ENCODE measurements at regions of chr5 and their contacts with region 1.

Region 1: GRCh38 chr5:148730943-148731861 is 76.9 kb upstream of the HTR4 start:
- DNase-seq: peak; percentile 65 to 69
- H3K4me3 ChIP-seq: no peak overlapping the region
- H3K27ac ChIP-seq: no peak overlapping the region
- H3K4me1 ChIP-seq: peaks cover 27% of the 10 kb centered on the region
- H3K27me3 ChIP-seq: no peaks in the 10 kb centered on the region
- CTCF ChIP-seq: peak; percentile 95

Region 2: GRCh38 chr5:146860213-146860893 is 1870.8 kb before region 1 on chr5:
- CTCF ChIA-PET with region 1: no interaction called
- POLR2A ChIA-PET with region 1: interaction called, 42 read pairs
- intact Hi-C with region 1: no loop called
- DNase-seq: peak in 1 of 2 experiments; percentile 66
- H3K4me3 ChIP-seq: no peak overlapping the region
- H3K27ac ChIP-seq: no peak overlapping the region
- H3K4me1 ChIP-seq: 0 out of 2 replicates have a peak, but pooled peaks cover 6% of the 10 kb centered on the region
- H3K27me3 ChIP-seq: no peaks in the 10 kb centered on the region
- CTCF ChIP-seq: no peak

Region 3: GRCh38 chr5:148179234-148179824 is 551.9 kb before region 1 on chr5:
- CTCF ChIA-PET with region 1: interaction called, 9 read pairs
- POLR2A ChIA-PET with region 1: no interaction called
- intact Hi-C with region 1: loop called (anchors 1 kb)
- DNase-seq: peak; percentile 6 to 63
- H3K4me3 ChIP-seq: no peak overlapping the region
- H3K27ac ChIP-seq: no peak overlapping the region
- H3K4me1 ChIP-seq: no peaks in the 10 kb centered on the region
- H3K27me3 ChIP-seq: no peaks in the 10 kb centered on the region
- CTCF ChIP-seq: peak; percentile 84

Region 4: DNA sequence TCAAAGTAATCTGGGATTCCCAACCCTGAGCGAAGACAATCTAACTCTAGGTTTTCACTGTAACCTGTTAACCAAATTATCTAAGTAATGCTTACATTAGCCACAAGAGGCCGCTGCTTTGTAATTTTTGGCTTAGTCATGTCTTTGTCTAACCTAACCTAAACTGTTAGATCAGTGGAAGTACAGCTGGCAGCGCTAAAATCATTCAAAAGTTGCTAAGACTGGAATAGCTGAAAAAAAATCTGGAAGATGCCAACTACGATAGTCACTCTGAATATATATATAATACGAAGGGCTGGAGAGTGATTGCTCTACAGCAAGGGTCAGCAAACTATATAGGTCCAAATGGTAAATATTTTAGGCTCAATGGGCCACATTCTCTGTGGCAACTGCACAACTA is 287.2 kb before region 1 on chr5:
- CTCF ChIA-PET with region 1: interaction called, 50 read pairs
- POLR2A ChIA-PET with region 1: no interaction called
- intact Hi-C with region 1: loop called (anchors 1 kb)
- DNase-seq: peak; percentile 39 to 65
- H3K4me3 ChIP-seq: no peak overlapping the region
- H3K27ac ChIP-seq: no peak overlapping the region
- H3K4me1 ChIP-seq: no peaks in the 10 kb centered on the region
- H3K27me3 ChIP-seq: no peaks in the 10 kb centered on the region
- CTCF ChIP-seq: peak; percentile 89

Region 5: DNA sequence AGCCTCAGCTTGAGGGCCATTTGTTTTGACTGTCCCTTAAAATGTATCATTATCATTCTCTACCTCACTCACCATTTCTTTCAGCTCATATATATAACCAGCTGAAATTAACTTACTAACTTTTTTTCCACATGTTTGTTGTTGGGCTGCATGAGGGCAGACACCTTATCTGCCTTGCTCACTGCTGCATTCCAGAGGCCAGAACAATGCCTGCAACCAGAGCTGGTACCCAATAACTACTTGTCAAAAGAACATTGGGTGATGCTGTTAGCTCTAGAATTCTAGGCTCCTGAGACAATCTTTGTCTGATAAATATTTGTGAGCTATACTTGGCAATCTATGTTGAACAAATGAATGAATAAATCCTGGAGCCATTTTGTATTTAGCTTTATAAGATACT is 145.2 kb before region 1 on chr5:
- CTCF ChIA-PET with region 1: no interaction called
- POLR2A ChIA-PET with region 1: no interaction called
- intact Hi-C with region 1: no loop called
- DNase-seq: no peak
- H3K4me3 ChIP-seq: no peak overlapping the region
- H3K27ac ChIP-seq: no peak overlapping the region
- H3K4me1 ChIP-seq: no peaks in the 10 kb centered on the region
- H3K27me3 ChIP-seq: no peaks in the 10 kb centered on the region
- CTCF ChIP-seq: no peak

Region 6: GRCh38 chr5:148708854-148709253 is 22.3 kb before region 1 on chr5:
- CTCF ChIA-PET with region 1: no interaction called
- POLR2A ChIA-PET with region 1: no interaction called
- intact Hi-C with region 1: no loop called
- DNase-seq: no peak
- H3K4me3 ChIP-seq: no peak overlapping the region
- H3K27ac ChIP-seq: no peak overlapping the region
- H3K4me1 ChIP-seq: no peaks in the 10 kb centered on the region
- H3K27me3 ChIP-seq: no peaks in the 10 kb centered on the region
- CTCF ChIP-seq: no peak

Region 7: DNA sequence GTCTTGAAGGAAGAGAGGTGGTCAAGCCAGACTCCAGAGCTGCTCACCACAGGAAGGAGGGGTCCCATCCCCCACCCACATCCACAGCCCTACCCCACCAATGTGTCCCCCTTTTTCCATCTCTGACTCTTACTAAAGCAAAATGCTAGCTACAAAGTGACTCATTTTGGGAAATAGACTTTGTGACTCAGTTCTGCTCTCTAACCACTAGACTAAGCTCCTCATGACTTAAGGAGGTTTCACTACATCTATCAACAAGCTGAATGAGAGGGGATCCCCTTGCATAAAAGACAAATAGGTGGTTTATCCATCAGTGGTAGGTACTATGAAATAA is 60.1 kb after region 1 on chr5:
- CTCF ChIA-PET with region 1: no interaction called
- POLR2A ChIA-PET with region 1: no interaction called
- intact Hi-C with region 1: no loop called
- DNase-seq: no peak
- H3K4me3 ChIP-seq: no peak overlapping the region
- H3K27ac ChIP-seq: no peak overlapping the region
- H3K4me1 ChIP-seq: no peaks in the 10 kb centered on the region
- H3K27me3 ChIP-seq: no peaks in the 10 kb centered on the region
- CTCF ChIP-seq: no peak

Region 8: GRCh38 chr5:148875205-148875875 is 144.1 kb after region 1 on chr5:
- CTCF ChIA-PET with region 1: no interaction called
- POLR2A ChIA-PET with region 1: no interaction called
- intact Hi-C with region 1: no loop called
- DNase-seq: no peak
- H3K4me3 ChIP-seq: no peak overlapping the region
- H3K27ac ChIP-seq: no peak overlapping the region
- H3K4me1 ChIP-seq: no peaks in the 10 kb centered on the region
- H3K27me3 ChIP-seq: no peaks in the 10 kb centered on the region
- CTCF ChIP-seq: no peak

Region 9: DNA sequence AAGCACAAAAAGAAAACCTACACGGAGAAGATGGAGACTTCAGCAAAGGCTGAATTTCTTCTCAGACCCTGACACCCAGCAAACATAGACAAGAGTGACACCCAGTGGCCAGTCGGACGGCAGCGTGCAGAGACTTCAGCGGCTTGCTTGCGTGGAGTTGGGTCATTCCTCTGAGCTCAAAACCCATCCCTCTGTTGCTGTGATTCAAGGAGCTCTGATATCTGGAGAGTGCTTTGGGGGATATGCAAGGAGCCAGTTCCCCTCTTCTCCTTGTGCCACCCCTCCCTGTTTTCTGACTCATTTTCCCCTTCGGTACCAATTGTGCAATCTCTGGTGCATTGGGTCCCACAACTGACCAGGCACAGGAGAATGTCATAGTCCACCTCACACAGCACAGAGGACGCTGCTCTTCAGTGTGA is 304.2 kb after region 1 on chr5:
- CTCF ChIA-PET with region 1: interaction called, 44 read pairs
- POLR2A ChIA-PET with region 1: interaction called, 11 read pairs
- intact Hi-C with region 1: loop called (anchors 1 kb)
- DNase-seq: peak; percentile 66 to 79
- H3K4me3 ChIP-seq: no peak overlapping the region
- H3K27ac ChIP-seq: peak overlapping the region; percentile 1; the same call in 1 of the 2 replicates
- H3K4me1 ChIP-seq: peaks cover 58% of the 10 kb centered on the region
- H3K27me3 ChIP-seq: no peaks in the 10 kb centered on the region
- CTCF ChIP-seq: peak; percentile 90

Region 10: DNA sequence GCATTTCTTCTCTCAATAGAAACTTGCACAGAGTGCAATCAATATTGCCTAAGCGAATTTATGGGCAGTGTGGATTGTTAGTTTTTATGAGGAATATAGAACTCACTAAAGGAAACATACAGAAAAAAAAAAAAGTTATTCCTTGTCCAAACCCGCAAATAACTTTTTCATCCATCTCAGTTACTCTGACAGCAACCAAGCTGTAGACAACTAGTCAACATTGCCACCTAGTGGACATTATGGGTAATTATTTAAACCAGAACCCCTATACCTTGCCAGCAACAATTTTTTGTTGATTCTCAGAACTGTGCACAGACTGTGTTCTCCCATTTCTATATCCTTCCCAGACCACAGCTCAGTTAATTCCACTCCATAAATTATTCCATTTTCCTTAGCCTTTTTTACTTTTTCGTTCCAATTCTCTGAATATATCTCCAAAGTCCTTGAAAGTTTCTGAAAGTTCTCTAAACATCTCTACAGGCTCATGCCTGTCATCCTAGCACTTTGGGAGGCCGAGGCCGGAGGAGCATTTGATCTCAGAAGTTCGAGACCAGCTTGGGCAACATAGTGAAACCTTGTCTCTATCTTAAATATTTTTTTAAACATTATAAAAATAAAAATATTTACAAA is 537.8 kb after region 1 on chr5:
- CTCF ChIA-PET with region 1: interaction called, 8 read pairs
- POLR2A ChIA-PET with region 1: no interaction called
- intact Hi-C with region 1: loop called (anchors 1 kb)
- DNase-seq: peak in 1 of 2 experiments; percentile 72
- H3K4me3 ChIP-seq: no peak overlapping the region
- H3K27ac ChIP-seq: no peak overlapping the region
- H3K4me1 ChIP-seq: peaks cover 13% of the 10 kb centered on the region
- H3K27me3 ChIP-seq: no peaks in the 10 kb centered on the region
- CTCF ChIP-seq: peak; percentile 91